Naive thymus-derived CD4-positive, alpha-beta T cell (primary cell): ENCODE measurements at regions of chr10 and their contacts with region 1.

Region 1: GRCh38 chr10:3785257-3785850 is 345 bp upstream of the KLF6 start:
- DNase-seq: peak; percentile 99 to 100 (median 99)
- ATAC-seq: peak; percentile 86
- H3K4me3 ChIP-seq: peak overlapping the region; percentile 75
- H3K4me3 Mint-ChIP-seq: peak overlapping the region; percentile 85 to 99 (median 94)
- H3K27ac ChIP-seq: peak overlapping the region; percentile 99
- H3K27ac Mint-ChIP-seq: peak overlapping the region; percentile 93 to 99 (median 99)
- H3K4me1 ChIP-seq: peaks cover 21 to 30% of the 10 kb centered on the region in 2 donors
- H3K4me1 Mint-ChIP-seq: peaks cover 21 to 52% (median 37%) of the 10 kb centered on the region in 7 donors
- H3K27me3 ChIP-seq: no peaks in the 10 kb centered on the region
- H3K27me3 Mint-ChIP-seq: peaks cover 0 to 12% (median 0%) of the 10 kb centered on the region in 5 donors

Region 2: DNA sequence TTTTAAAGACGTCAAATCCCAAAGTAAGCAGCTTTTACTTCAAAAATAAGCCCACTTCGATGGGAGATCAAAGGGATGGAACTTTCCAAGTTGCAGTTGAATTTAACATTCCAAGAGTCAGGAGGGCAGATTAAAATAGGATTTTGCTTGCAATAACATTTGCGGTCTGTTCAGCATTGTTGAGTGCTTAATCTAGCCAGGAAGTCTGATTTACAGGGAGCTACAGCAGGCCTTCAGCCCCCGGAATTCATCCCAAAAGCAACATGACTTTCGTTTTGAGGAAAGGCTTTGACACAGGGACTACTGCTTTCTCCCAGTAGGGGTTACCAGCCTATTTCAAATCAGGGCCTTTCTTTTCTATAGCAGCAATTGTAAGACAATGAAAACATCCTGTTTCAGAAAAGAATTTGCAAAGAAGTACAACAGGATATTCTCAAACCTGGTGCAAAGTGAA is 333.2 kb before region 1 on chr10:
- CTCF ChIA-PET with region 1: interaction called, 4 read pairs
- POLR2A ChIA-PET with region 1: interaction called, 59 read pairs
- intact Hi-C with region 1: loop called in 1 of 2 experiments (anchors 2 kb)
- DNase-seq: peak in 6 of 9 donors; percentile 18 to 56 (median 24)
- ATAC-seq: no peak
- H3K4me3 ChIP-seq: no peak overlapping the region
- H3K4me3 Mint-ChIP-seq: peak overlapping the region in 1 of 10 donors; percentile 57
- H3K27ac ChIP-seq: peak overlapping the region; percentile 51
- H3K27ac Mint-ChIP-seq: peak overlapping the region in 8 of 9 donors; percentile 16 to 88 (median 78)
- H3K4me1 ChIP-seq: peaks cover 0 to 38% of the 10 kb centered on the region in 2 donors
- H3K4me1 Mint-ChIP-seq: peaks cover 7 to 48% (median 36%) of the 10 kb centered on the region in 7 donors
- H3K27me3 ChIP-seq: peaks cover 0 to 6% of the 10 kb centered on the region in 2 donors
- H3K27me3 Mint-ChIP-seq: peaks cover 0 to 32% (median 0%) of the 10 kb centered on the region in 5 donors

Region 3: GRCh38 chr10:3714531-3714930 is 70.8 kb before region 1 on chr10:
- CTCF ChIA-PET with region 1: no interaction called
- POLR2A ChIA-PET with region 1: no interaction called
- intact Hi-C with region 1: no loop called
- DNase-seq: no peak
- ATAC-seq: no peak
- H3K4me3 ChIP-seq: no peak overlapping the region
- H3K4me3 Mint-ChIP-seq: no peak overlapping the region
- H3K27ac ChIP-seq: no peak overlapping the region
- H3K27ac Mint-ChIP-seq: no peak overlapping the region
- H3K4me1 ChIP-seq: no peaks in the 10 kb centered on the region
- H3K4me1 Mint-ChIP-seq: peaks cover 0 to 5% (median 0%) of the 10 kb centered on the region in 7 donors
- H3K27me3 ChIP-seq: no peaks in the 10 kb centered on the region
- H3K27me3 Mint-ChIP-seq: peaks cover 0 to 14% (median 0%) of the 10 kb centered on the region in 5 donors

Region 4: DNA sequence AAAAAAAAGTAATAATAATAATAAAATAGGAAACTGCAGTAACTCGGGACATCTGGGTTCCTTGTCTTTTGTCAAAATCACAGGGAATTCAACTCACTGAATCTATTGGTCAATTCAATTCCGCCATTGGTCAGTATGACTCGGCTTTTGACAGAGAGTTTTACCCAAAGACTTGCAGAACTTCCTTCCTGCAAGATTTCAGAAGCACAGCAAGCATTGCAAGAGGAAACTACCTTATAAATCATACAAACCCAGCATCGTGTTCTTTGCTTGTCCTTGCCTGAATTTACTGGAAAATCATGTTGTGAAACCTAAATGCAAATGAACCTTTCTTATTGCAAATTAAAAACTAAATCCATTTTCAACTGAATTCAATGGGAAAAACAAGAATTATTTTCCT is 15.8 kb before region 1 on chr10:
- CTCF ChIA-PET with region 1: no interaction called
- POLR2A ChIA-PET with region 1: interaction called, 42 read pairs
- intact Hi-C with region 1: loop called in 1 of 2 experiments (anchors 2 kb)
- DNase-seq: no peak
- ATAC-seq: no peak
- H3K4me3 ChIP-seq: no peak overlapping the region
- H3K4me3 Mint-ChIP-seq: no peak overlapping the region
- H3K27ac ChIP-seq: no peak overlapping the region
- H3K27ac Mint-ChIP-seq: peak overlapping the region in 1 of 9 donors; percentile 17
- H3K4me1 ChIP-seq: peaks cover 13 to 25% of the 10 kb centered on the region in 2 donors
- H3K4me1 Mint-ChIP-seq: peaks cover 13 to 51% (median 19%) of the 10 kb centered on the region in 7 donors
- H3K27me3 ChIP-seq: no peaks in the 10 kb centered on the region
- H3K27me3 Mint-ChIP-seq: no peaks in the 10 kb centered on the region

Region 5: GRCh38 chr10:3835770-3836169 is 50.4 kb after region 1 on chr10:
- CTCF ChIA-PET with region 1: no interaction called
- POLR2A ChIA-PET with region 1: interaction called, 91 read pairs
- intact Hi-C with region 1: no loop called
- DNase-seq: no peak
- ATAC-seq: peak; percentile 65
- H3K4me3 ChIP-seq: no peak overlapping the region
- H3K4me3 Mint-ChIP-seq: no peak overlapping the region
- H3K27ac ChIP-seq: no peak overlapping the region
- H3K27ac Mint-ChIP-seq: no peak overlapping the region
- H3K4me1 ChIP-seq: peaks cover 0 to 8% of the 10 kb centered on the region in 2 donors
- H3K4me1 Mint-ChIP-seq: peaks cover 0 to 56% (median 0%) of the 10 kb centered on the region in 7 donors
- H3K27me3 ChIP-seq: no peaks in the 10 kb centered on the region
- H3K27me3 Mint-ChIP-seq: no peaks in the 10 kb centered on the region

Region 6: GRCh38 chr10:3935141-3935540 is 149.8 kb after region 1 on chr10:
- CTCF ChIA-PET with region 1: no interaction called
- POLR2A ChIA-PET with region 1: interaction called, 9 read pairs
- intact Hi-C with region 1: loop called in 1 of 2 experiments (anchors 2 kb)
- DNase-seq: peak in 6 of 9 donors; percentile 4 to 73 (median 22)
- ATAC-seq: peak; percentile 84
- H3K4me3 ChIP-seq: peak overlapping the region; percentile 32
- H3K4me3 Mint-ChIP-seq: peak overlapping the region; percentile 43 to 83 (median 78)
- H3K27ac ChIP-seq: peak overlapping the region; percentile 43
- H3K27ac Mint-ChIP-seq: peak overlapping the region; percentile 67 to 95 (median 86)
- H3K4me1 ChIP-seq: peaks cover 0 to 5% of the 10 kb centered on the region in 2 donors
- H3K4me1 Mint-ChIP-seq: peaks cover 11 to 61% (median 17%) of the 10 kb centered on the region in 7 donors
- H3K27me3 ChIP-seq: no peaks in the 10 kb centered on the region
- H3K27me3 Mint-ChIP-seq: no peaks in the 10 kb centered on the region

Region 7: GRCh38 chr10:3972460-3973301 is 187.3 kb after region 1 on chr10:
- CTCF ChIA-PET with region 1: no interaction called
- POLR2A ChIA-PET with region 1: interaction called, 35 read pairs
- intact Hi-C with region 1: loop called in 1 of 2 experiments (anchors 2 kb)
- DNase-seq: peak in 7 of 9 donors; percentile 8 to 47 (median 35)
- ATAC-seq: peak; percentile 89
- H3K4me3 ChIP-seq: peak overlapping the region; percentile 36
- H3K4me3 Mint-ChIP-seq: peak overlapping the region; percentile 63 to 89 (median 82)
- H3K27ac ChIP-seq: peak overlapping the region; percentile 66
- H3K27ac Mint-ChIP-seq: peak overlapping the region; percentile 86 to 98 (median 96)
- H3K4me1 ChIP-seq: peaks cover 56 to 71% of the 10 kb centered on the region in 2 donors
- H3K4me1 Mint-ChIP-seq: peaks cover 38 to 61% (median 54%) of the 10 kb centered on the region in 7 donors
- H3K27me3 ChIP-seq: no peaks in the 10 kb centered on the region
- H3K27me3 Mint-ChIP-seq: no peaks in the 10 kb centered on the region